Breast epithelium (tissue), 4 donors: ENCODE measurements at regions of chr3 and their contacts with region 1.

Region 1: DNA sequence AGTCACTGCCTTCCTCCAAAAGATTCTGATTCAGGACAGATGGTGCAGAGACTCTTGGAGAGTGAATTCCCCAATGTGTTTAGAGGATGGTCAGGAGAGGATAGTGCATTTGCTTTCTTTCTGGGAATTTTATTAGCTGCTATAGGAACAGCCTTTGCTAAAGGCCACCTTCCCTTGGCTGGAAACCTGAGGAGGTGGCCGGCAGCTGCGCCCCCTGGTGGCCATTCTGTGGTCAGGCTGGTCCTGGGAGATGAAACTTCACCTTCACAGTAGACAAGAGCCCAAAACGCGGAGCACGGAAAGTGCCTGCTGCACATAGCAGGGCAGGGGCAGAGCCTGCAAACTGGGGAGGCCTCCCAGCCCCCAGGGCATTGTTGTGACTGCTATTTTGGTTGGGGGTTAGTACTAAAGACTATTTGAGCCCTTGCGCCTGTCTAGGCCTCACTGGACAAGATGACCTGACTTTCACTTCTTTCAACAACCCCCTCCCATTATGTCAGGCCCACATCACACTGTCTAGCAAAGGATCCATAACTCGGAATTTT is 34.3 kb downstream of the SEC22C start:
- DNase-seq: peak; percentile 43 to 84
- H3K4me3 ChIP-seq: no peak overlapping the region
- H3K27ac ChIP-seq: no peak overlapping the region
- H3K4me1 ChIP-seq: no peaks in the 10 kb centered on the region
- H3K27me3 ChIP-seq: no peaks in the 10 kb centered on the region
- CTCF ChIP-seq: peak; percentile 77 to 86 (median 83)
- POLR2A ChIP-seq: no peak

Region 2: GRCh38 chr3:41120460-41120859 is 1427.0 kb before region 1 on chr3:
- intact Hi-C with region 1: loop called (anchors 5 kb)
- DNase-seq: no peak
- H3K4me3 ChIP-seq: no peak overlapping the region
- H3K27ac ChIP-seq: peak overlapping the region in 1 of 2 donors; percentile 28
- H3K4me1 ChIP-seq: no peaks in the 10 kb centered on the region
- H3K27me3 ChIP-seq: no peaks in the 10 kb centered on the region
- CTCF ChIP-seq: no peak
- POLR2A ChIP-seq: no peak

Region 3: GRCh38 chr3:41198950-41199865 is 1348.3 kb before region 1 on chr3 and contains the start of gene CTNNB1:
- intact Hi-C with region 1: loop called (anchors 5 kb)
- DNase-seq: peak; percentile 90 to 91
- H3K4me3 ChIP-seq: peak within 1 kb of the TSS; percentile 92 to 96 (median 96)
- H3K27ac ChIP-seq: peak within 1 kb of the TSS; percentile 99 to 100
- H3K4me1 ChIP-seq: peaks cover 0 to 12% of the 10 kb centered on the region in 2 donors
- H3K27me3 ChIP-seq: no peaks in the 10 kb centered on the region
- CTCF ChIP-seq: peak in 1 of 3 donors; percentile 28
- POLR2A ChIP-seq: peak; percentile 98
- total RNA-seq, gene CTNNB1: 419 to 687 (median 617) TPM

Region 4: GRCh38 chr3:42468111-42468510 is 79.4 kb before region 1 on chr3:
- intact Hi-C with region 1: no loop called
- DNase-seq: no peak
- H3K4me3 ChIP-seq: no peak overlapping the region
- H3K27ac ChIP-seq: no peak overlapping the region
- H3K4me1 ChIP-seq: peaks cover 0 to 2% of the 10 kb centered on the region in 2 donors
- H3K27me3 ChIP-seq: no peaks in the 10 kb centered on the region
- CTCF ChIP-seq: no peak
- POLR2A ChIP-seq: no peak

Region 5: GRCh38 chr3:42562047-42562907 is 14.8 kb after region 1 on chr3:
- intact Hi-C with region 1: no loop called
- DNase-seq: no peak
- H3K4me3 ChIP-seq: no peak overlapping the region
- H3K27ac ChIP-seq: peak overlapping the region in 1 of 2 donors; percentile 34
- H3K4me1 ChIP-seq: no peaks in the 10 kb centered on the region
- H3K27me3 ChIP-seq: no peaks in the 10 kb centered on the region
- CTCF ChIP-seq: no peak
- POLR2A ChIP-seq: no peak